Activated naive CD4-positive, alpha-beta T cell treated with anti-CD3 and anti-CD28 coated beads for 36 hours (primary cell): ENCODE measurements at regions of chr18 and their contacts with region 1.

Region 1: DNA sequence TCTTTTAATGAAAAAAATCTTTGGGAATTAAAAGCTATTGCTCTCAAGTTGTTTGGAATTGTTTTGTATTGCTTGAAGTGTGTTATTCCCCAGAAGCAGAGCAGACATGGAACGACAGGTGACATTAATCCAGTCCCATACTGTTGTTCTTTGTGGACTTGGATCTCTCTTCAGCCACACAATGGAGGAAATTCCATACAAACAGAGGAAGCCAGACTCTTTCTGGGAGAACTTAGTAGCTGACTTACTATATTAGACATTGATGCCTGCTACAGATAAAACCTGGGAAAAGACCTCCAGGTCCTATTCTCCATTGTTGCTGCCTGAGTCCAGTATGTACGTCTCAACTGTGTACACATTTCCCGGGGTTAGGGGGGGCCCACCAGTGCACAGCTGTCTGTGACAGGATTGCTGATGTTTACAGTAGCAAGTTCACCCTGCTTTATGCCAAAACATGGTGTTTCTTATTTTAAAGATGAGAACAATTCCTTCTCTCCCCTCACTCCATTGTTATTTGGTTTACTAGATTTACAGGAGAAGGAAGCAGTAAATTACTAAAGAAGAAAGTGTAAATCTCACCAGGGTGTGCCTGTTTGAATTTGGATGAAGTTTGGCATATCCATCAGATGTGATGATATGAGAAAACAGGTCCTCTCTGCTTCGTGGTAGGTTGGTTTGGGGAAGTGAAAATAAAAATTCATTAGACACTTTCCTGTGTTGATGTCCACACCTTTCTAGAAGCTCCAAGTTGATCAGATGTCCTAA is 142.4 kb upstream of the RBBP8 start:
- DNase-seq: no peak
- H3K4me3 Mint-ChIP-seq: no peak overlapping the region
- H3K27ac Mint-ChIP-seq: no peak overlapping the region
- H3K4me1 Mint-ChIP-seq: no peaks in the 10 kb centered on the region
- H3K27me3 Mint-ChIP-seq: peaks cover 15% of the 10 kb centered on the region

Region 2: DNA sequence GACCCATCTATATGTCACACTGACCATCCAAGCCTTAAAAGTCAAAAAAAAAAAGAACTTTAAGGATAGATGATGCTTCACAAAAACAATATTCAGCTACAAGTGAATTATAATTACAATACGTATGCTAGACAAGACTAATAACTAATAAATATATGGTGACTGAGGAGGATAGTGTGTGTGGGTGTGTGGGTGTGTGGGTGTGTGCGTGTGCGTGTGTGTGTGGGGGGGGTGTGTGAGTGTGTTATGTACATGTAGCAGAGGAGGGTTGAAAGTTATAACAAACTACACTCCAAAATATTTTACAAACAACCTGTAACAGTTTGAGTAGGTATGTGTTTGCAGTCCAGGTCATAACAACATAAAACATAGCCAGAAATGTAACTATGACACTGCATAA is 16.8 kb before region 1 on chr18:
- CTCF ChIA-PET with region 1: no interaction called
- intact Hi-C with region 1: no loop called
- DNase-seq: no peak
- H3K4me3 Mint-ChIP-seq: no peak overlapping the region
- H3K27ac Mint-ChIP-seq: no peak overlapping the region
- H3K4me1 Mint-ChIP-seq: no peaks in the 10 kb centered on the region
- H3K27me3 Mint-ChIP-seq: peaks cover 12% of the 10 kb centered on the region

Region 3: DNA sequence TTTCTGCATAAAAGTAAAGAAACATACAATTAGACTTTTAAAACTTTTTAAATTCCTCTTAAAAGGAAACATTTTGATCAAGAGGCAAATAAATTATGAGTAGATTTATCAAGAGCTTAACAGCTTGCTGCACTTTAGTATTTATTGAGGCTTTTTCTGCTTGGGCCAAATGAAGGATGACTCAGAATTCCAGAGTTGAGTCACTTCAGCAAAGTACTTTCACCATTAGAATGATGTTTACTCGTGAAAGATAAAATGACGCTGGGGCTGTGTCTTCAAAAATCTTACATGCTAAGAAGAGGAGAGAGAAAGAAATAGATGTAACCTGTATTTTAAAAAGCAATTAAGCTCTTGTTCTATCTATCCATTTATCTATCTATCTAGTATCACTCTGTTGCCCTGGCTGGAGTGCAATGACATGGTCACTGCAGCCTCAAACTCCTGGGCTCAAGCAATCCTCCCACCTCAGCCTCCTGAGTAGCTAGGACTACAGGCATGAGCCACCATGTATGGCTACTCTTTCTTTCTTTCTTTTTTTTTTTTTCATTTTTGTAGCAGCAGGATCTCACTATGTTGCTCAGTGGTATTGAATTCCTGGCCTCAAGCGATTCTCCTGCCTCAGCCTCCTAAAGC is 587.1 kb after region 1 on chr18:
- CTCF ChIA-PET with region 1: no interaction called
- intact Hi-C with region 1: loop called (anchors 10 kb)
- DNase-seq: peak; percentile 20
- H3K4me3 Mint-ChIP-seq: no peak overlapping the region
- H3K27ac Mint-ChIP-seq: peak overlapping the region; percentile 53
- H3K4me1 Mint-ChIP-seq: peaks cover 16% of the 10 kb centered on the region
- H3K27me3 Mint-ChIP-seq: no peaks in the 10 kb centered on the region